PC-9 (cell line): ENCODE measurements at regions of chr1 and their contacts with region 1.

Region 1: DNA sequence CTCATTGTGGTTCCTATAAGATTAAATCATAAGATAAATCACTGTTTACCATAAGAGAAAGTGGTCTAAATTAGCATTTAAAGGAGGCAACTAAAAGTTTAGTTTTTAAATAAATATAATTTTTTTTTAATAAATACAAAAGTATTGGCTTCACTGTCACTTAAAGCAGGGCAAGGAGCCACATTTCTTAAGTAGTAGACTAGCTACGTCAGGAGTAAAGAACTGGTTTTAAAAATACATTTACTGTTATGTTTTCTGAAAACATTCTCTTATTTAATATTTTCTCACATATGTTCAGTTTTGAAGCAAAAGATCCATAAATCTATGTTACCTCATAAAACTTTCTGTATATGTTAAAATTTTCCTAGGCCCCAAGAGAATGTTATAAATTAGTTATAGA is 2.2 kb downstream of the ANGPTL1 start:
- DNase-seq: no peak
- H3K4me3 ChIP-seq: no peak overlapping the region
- H3K27ac ChIP-seq: no peak overlapping the region
- H3K4me1 ChIP-seq: peaks cover 17% of the 10 kb centered on the region
- H3K27me3 ChIP-seq: no peaks in the 10 kb centered on the region
- CTCF ChIP-seq: no peak

Region 2: DNA sequence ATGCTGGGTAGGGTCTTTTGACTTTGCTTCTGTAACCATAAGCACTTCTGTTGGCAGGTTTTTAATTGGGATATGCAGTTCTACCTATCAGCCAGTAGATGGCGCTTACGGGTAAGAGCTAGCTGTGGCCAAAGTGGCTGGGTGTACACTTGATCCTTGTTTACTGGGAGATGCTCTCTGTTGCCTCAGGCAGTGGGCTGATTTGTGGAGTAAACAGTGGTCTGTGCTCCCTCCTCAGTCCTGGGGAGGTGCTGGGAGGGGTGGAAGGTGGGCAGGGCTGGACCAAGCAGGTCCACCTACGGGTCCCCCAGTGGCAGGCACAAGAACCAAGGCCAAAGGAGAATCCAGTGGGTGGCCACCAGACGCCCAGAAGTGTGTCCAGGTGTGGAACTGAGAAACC is 100.3 kb before region 1 on chr1:
- CTCF ChIA-PET with region 1: no interaction called
- POLR2A ChIA-PET with region 1: no interaction called
- intact Hi-C with region 1: no loop called
- DNase-seq: no peak
- H3K4me3 ChIP-seq: no peak overlapping the region
- H3K27ac ChIP-seq: no peak overlapping the region
- H3K4me1 ChIP-seq: no peaks in the 10 kb centered on the region
- H3K27me3 ChIP-seq: no peaks in the 10 kb centered on the region
- CTCF ChIP-seq: peak; percentile 78

Region 3: DNA sequence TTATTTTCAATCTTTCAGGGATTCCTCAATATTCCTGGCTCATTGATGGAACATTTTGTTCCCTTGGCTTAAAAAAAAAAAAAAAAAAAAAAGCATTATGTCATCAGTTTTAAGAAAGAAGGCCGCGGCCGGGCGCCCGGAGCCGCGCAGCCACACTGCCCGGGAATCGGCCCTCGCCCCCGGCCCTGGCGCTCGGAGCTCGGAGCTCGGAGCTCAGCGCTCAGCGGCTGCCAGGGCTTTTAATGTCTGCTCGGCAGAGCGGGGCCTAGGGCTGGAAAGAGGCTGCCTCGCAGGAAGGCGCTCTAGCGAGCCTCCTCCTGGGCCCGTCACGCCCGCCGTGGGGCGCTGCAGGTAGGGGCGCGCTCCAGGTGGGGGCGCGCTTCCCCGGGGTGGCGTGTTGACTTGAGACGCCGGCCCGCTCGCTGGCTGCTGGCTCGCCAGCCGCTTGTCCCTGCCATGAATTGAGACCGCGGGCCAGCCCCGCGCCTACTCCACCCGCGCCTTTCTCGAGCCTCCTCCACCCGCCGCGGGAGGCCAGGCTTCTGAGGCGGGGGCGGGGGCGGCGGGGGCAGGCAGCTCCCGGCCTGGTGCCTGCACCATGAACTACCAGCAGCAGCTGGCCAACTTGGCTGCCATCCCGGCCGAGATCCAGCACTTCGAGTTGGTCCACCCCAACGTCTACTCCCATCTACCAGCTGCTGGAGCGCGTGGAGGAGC is 717.6 kb after region 1 on chr1:
- CTCF ChIA-PET with region 1: interaction called, 10 read pairs
- POLR2A ChIA-PET with region 1: no interaction called
- intact Hi-C with region 1: no loop called
- DNase-seq: peak in 1 of 2 experiments; percentile 69
- H3K4me3 ChIP-seq: peak overlapping the region; percentile 55
- H3K27ac ChIP-seq: no peak overlapping the region
- H3K4me1 ChIP-seq: no peaks in the 10 kb centered on the region
- H3K27me3 ChIP-seq: peaks cover 27% of the 10 kb centered on the region
- CTCF ChIP-seq: peak; percentile 58